GM18951 (cell line): ENCODE measurements at regions of chr5 and their contacts with region 1.

Region 1: DNA sequence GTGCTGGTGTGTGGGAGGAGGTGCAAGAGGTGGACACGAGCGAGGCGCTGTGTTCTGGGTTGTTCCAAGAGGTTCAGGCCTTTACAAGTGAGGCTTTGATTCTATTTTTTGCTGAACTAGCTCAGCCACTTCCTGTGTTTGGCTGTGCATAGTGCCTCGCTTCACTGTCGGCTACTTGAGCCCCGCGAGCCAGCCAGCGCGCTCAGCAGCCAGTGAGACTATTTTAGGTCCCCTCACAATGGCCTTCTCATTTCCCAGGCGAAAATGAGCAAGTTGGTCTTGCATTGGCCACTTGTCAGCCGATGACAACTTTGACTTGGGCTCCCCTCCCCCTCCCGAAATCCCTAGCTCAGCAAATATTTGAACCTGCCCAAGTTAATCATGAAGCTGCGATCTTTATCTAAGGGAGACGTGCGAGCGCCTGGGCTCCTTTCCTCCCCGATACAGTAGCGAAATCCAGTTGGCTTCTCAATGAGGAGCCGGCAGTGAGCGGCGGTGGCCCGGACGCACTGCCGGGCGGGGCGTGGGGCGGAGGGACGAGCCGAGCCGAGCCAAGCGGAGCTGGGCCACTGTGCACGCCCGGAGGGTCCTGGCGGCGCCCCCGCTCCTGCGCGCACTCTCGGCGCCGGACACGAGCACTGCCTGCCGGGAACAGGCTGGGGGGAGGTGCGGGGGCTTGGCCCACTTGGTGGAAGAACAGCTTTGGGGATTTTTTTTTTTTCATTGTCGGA is 72.6 kb downstream of the PIK3R1 start:
- POLR2A ChIP-seq: peak; percentile 47

Region 2: GRCh38 chr5:67437905-67438845 is 850.0 kb before region 1 on chr5:
- in situ Hi-C with region 1: no loop called
- POLR2A ChIP-seq: no peak

Region 3: GRCh38 chr5:68456756-68457217 is 168.6 kb after region 1 on chr5:
- in situ Hi-C with region 1: loop called (anchors 5 kb)
- POLR2A ChIP-seq: no peak

Region 4: GRCh38 chr5:68924490-68925145 is 636.5 kb after region 1 on chr5:
- in situ Hi-C with region 1: no loop called
- POLR2A ChIP-seq: no peak

Region 5: DNA sequence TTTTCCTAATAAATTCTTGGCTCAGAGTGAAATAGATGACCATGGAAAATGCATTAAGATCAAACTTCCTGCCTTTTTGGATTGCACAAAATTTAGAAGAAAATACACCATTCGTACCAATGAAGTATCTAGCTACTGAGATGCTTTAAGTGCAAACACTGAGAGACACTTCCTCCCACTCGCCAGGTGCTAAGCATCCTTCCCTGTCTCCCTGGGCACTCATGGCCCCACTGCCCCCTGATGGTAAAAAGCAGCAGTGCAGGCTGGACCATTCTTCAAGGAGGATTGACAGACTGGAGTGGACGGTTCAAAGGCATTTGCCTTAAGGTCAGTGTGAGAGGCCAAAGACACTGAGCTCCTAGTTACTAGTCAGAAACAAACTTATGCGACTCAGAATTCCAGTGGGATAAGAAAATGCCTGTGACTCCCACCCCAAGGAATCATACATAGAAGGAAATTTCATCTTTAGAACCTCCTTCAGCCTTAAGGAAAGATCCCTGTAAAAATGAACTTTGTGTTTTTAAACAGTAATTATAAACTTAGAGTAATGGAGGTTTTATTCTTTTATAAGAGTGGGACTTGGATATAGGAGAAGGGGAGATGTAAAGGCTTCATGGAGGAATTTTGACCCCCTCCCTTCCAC is 719.7 kb after region 1 on chr5:
- in situ Hi-C with region 1: loop called (anchors 25 kb)
- POLR2A ChIP-seq: no peak